Activated T-helper 1 cell treated with anti-CD3 and anti-CD28 coated beads, Interleukin-12 subunit alpha, Interleukin-12 subunit beta, Interleukin-2, Interleukin-4 antibody, amounts not matched to agents 30 ng/mL and 10 ng/mL and 1 ng/mL, durations not matched to agents 14 hours and 24 hours and 36 hours (primary cell): ENCODE measurements at regions of chr17 and their contacts with region 1.

Region 1: GRCh38 chr17:5065227-5065744 is 13.0 kb upstream of the ZFP3 start:
- DNase-seq: no peak
- H3K4me3 Mint-ChIP-seq: no peak overlapping the region
- H3K27ac Mint-ChIP-seq: peak overlapping the region; percentile 30
- H3K4me1 Mint-ChIP-seq: peaks cover 9% of the 10 kb centered on the region
- H3K27me3 Mint-ChIP-seq: peaks cover 4% of the 10 kb centered on the region

Region 2: GRCh38 chr17:4980644-4981216 is 84.6 kb before region 1 on chr17:
- intact Hi-C with region 1: loop called (anchors 1 kb)
- DNase-seq: peak; percentile 42
- H3K4me3 Mint-ChIP-seq: no peak overlapping the region
- H3K27ac Mint-ChIP-seq: peak overlapping the region; percentile 56
- H3K4me1 Mint-ChIP-seq: peaks cover 20% of the 10 kb centered on the region
- H3K27me3 Mint-ChIP-seq: no peaks in the 10 kb centered on the region

Region 3: GRCh38 chr17:5019475-5019956 is 45.8 kb before region 1 on chr17:
- intact Hi-C with region 1: loop called (anchors 1 kb)
- DNase-seq: no peak
- H3K4me3 Mint-ChIP-seq: no peak overlapping the region
- H3K27ac Mint-ChIP-seq: peak overlapping the region; percentile 80
- H3K4me1 Mint-ChIP-seq: peaks cover 24% of the 10 kb centered on the region
- H3K27me3 Mint-ChIP-seq: no peaks in the 10 kb centered on the region

Region 4: GRCh38 chr17:5078106-5079028 is 13.1 kb after region 1 on chr17 and contains the start of gene ZFP3:
- intact Hi-C with region 1: no loop called
- DNase-seq: peak; percentile 72
- H3K4me3 Mint-ChIP-seq: peak within 1 kb of the TSS; percentile 81
- H3K27ac Mint-ChIP-seq: peak within 1 kb of the TSS; percentile 86
- H3K4me1 Mint-ChIP-seq: peaks cover 17% of the 10 kb centered on the region
- H3K27me3 Mint-ChIP-seq: peaks cover 2% of the 10 kb centered on the region
- total RNA-seq, gene ZFP3: 1.9 and 2.0 TPM in 2 replicates